ENCODE measurements at regions of chr10 and their contacts with region 1.

Region 1: DNA sequence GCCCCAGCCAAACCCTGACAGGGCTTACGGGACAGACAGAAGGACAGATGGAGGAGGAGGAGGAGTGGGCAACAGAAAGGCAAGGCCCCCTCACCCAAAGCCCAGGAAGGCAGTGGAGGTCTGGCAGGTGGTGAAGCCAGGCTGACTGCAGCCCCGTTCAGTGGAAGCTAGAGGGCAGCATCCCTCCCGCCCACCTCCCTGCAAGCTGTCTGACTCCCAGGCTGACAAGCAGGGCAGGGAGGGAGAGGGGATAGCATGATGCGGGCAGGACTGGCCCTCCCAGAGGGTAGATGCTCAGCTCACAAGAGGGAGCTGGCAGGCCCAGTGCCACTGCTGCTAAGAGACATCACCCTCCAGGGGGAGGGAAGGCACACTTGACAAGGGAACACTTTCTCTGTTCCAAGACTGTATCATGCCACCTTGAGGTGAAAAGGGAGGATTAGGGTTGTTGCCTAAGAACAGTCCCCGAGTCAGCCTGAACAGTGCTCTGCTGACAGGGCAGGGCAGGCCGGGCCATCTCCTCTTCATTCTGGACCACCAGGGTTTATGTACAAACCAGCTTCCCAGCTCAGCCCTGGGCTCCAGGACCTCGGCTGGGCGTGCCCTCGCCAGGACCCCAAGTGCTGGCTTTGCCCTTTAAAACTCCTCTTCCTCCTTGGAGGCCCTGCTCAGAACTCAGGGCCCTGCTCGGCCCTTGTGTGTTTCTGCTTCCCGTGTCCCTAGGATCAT is 61.8 kb downstream of the RASGEF1A start:
- DNase-seq: peak; percentile 76
- H3K4me3 Mint-ChIP-seq: no peak overlapping the region
- H3K27ac Mint-ChIP-seq: no peak overlapping the region
- H3K4me1 Mint-ChIP-seq: peaks cover 6% of the 10 kb centered on the region
- H3K27me3 Mint-ChIP-seq: no peaks in the 10 kb centered on the region

Region 2: GRCh38 chr10:43002596-43002995 is 202.5 kb before region 1 on chr10:
- CTCF ChIA-PET with region 1: no interaction called
- POLR2A ChIA-PET with region 1: no interaction called
- intact Hi-C with region 1: no loop called
- DNase-seq: no peak
- H3K4me3 Mint-ChIP-seq: no peak overlapping the region
- H3K27ac Mint-ChIP-seq: no peak overlapping the region
- H3K4me1 Mint-ChIP-seq: no peaks in the 10 kb centered on the region
- H3K27me3 Mint-ChIP-seq: peaks cover 2% of the 10 kb centered on the region

Region 3: GRCh38 chr10:43166880-43167497 is 38.1 kb before region 1 on chr10:
- CTCF ChIA-PET with region 1: interaction called, 12 read pairs
- POLR2A ChIA-PET with region 1: interaction called, 3 read pairs
- intact Hi-C with region 1: no loop called
- DNase-seq: no peak
- H3K4me3 Mint-ChIP-seq: no peak overlapping the region
- H3K27ac Mint-ChIP-seq: no peak overlapping the region
- H3K4me1 Mint-ChIP-seq: peaks cover 32% of the 10 kb centered on the region
- H3K27me3 Mint-ChIP-seq: no peaks in the 10 kb centered on the region

Region 4: GRCh38 chr10:43221419-43222209 is 16.5 kb after region 1 on chr10:
- CTCF ChIA-PET with region 1: interaction called, 18 read pairs
- POLR2A ChIA-PET with region 1: no interaction called
- intact Hi-C with region 1: no loop called
- DNase-seq: peak; percentile 8
- H3K4me3 Mint-ChIP-seq: no peak overlapping the region
- H3K27ac Mint-ChIP-seq: no peak overlapping the region
- H3K4me1 Mint-ChIP-seq: peaks cover 12% of the 10 kb centered on the region
- H3K27me3 Mint-ChIP-seq: no peaks in the 10 kb centered on the region

Region 5: DNA sequence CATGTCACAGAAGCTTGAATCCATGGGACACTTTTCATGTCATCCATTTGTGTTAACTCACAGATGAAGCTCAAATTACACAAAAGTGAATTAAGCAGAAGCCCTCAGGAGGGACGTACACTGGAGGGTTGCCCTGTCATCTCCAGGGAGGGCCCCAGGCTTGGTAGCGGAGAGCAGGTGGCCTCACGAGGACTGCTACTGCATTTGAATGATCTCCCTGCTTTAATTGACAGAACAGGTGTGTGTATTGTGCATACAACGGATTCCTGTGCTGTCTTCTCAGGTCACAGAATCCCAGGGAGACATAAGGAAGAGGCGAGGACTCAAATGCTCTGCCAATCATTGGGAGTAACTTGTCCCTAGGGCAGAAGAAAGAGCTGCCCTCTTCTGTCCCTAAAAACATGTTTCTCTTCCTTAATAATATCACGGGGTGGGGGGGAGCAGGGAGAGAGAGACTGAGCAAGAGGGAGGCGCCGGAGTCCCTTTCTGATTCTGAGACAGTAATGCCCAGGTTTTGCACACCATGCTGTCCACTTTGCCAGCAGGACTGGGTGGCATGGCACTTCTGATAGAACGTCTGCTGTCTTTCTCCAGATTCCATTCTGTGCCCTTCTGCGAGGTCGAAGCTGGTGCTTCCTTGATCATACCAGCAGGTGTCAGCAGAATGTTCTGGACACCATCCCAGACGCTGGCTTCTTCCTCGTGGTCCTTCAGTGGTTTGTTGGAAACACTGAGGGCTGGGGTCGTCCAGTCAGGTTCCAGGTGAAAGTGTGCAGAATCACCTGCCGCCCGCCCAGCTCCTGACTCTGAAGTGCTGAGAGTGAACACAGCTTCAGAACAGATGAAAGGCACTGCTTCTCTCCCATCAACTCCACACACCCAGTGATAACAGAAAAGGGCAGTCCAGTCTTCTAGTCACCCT is 87.9 kb after region 1 on chr10:
- CTCF ChIA-PET with region 1: interaction called, 14 read pairs
- POLR2A ChIA-PET with region 1: no interaction called
- intact Hi-C with region 1: no loop called
- DNase-seq: peak; percentile 68
- H3K4me3 Mint-ChIP-seq: no peak overlapping the region
- H3K27ac Mint-ChIP-seq: peak overlapping the region; percentile 49
- H3K4me1 Mint-ChIP-seq: peaks cover 50% of the 10 kb centered on the region
- H3K27me3 Mint-ChIP-seq: no peaks in the 10 kb centered on the region

Region 6: GRCh38 chr10:43461950-43462349 is 256.8 kb after region 1 on chr10:
- CTCF ChIA-PET with region 1: interaction called, 6 read pairs
- POLR2A ChIA-PET with region 1: no interaction called
- intact Hi-C with region 1: loop called (anchors 1 kb)
- DNase-seq: no peak
- H3K4me3 Mint-ChIP-seq: no peak overlapping the region
- H3K27ac Mint-ChIP-seq: peak overlapping the region; percentile 54
- H3K4me1 Mint-ChIP-seq: peaks cover 18% of the 10 kb centered on the region
- H3K27me3 Mint-ChIP-seq: no peaks in the 10 kb centered on the region